ENCODE measurements at regions of chr6 and their contacts with region 1.

Region 1: DNA sequence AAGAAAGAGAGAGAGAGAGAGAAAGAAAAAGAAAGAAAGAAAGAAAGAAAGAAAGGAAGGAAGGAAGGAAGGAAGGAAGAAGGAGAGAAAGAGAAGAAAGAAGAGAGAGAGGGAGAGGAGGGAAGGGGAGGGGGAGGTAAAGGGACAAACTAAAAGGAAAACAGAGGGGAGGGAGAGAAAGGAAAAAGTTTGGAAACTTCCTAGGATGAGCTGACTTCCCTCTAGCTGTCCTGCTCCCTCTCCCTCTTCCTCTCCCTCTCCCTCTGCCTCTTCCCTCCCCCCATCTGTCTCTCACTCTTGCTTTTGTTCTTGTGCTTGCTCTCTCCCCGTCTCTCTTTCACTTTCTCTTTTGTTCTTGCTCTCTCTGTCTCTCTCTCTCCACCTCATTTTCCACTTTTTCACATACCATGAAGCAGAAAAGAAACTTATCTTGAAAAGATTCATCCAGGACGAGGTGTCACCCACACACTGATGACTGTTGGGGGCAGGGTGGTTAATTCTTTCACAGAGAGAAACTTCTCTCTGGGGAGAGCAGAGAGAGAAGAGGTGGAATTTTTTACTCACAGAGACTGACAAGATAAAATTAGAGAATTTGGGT is 56.4 kb upstream of the DUSP22 start:
- DNase-seq: peak; percentile 83
- H3K4me3 Mint-ChIP-seq: peak overlapping the region; percentile 24
- H3K27ac Mint-ChIP-seq: peak overlapping the region; percentile 64
- H3K4me1 Mint-ChIP-seq: peaks cover 43% of the 10 kb centered on the region
- H3K27me3 Mint-ChIP-seq: no peaks in the 10 kb centered on the region

Region 2: GRCh38 chr6:251920-252319 is 16.1 kb after region 1 on chr6:
- CTCF ChIA-PET with region 1: no interaction called
- POLR2A ChIA-PET with region 1: interaction called, 3 read pairs
- intact Hi-C with region 1: loop called (anchors 1 kb)
- DNase-seq: no peak
- H3K4me3 Mint-ChIP-seq: no peak overlapping the region
- H3K27ac Mint-ChIP-seq: peak overlapping the region; percentile 61
- H3K4me1 Mint-ChIP-seq: peaks cover 30% of the 10 kb centered on the region
- H3K27me3 Mint-ChIP-seq: peaks cover 2% of the 10 kb centered on the region